Natural killer cell (primary cell): ENCODE measurements at regions of chr1 and their contacts with region 1.

Region 1: GRCh38 chr1:8629241-8630091 is 188.0 kb downstream of the RERE start:
- DNase-seq: peak in 1 of 2 donors; percentile 27
- ATAC-seq: peak; percentile 78 to 90 (median 86)
- H3K4me3 ChIP-seq: no peak overlapping the region
- H3K4me3 Mint-ChIP-seq: peak overlapping the region; percentile 69
- H3K27ac ChIP-seq: peak overlapping the region; percentile 32
- H3K27ac Mint-ChIP-seq: peak overlapping the region; percentile 80 to 85
- H3K4me1 ChIP-seq: peaks cover 8% of the 10 kb centered on the region
- H3K4me1 Mint-ChIP-seq: peaks cover 57 to 58% of the 10 kb centered on the region in 2 donors
- H3K27me3 ChIP-seq: no peaks in the 10 kb centered on the region
- H3K27me3 Mint-ChIP-seq: no peaks in the 10 kb centered on the region
- CTCF ChIP-seq: no peak

Region 2: DNA sequence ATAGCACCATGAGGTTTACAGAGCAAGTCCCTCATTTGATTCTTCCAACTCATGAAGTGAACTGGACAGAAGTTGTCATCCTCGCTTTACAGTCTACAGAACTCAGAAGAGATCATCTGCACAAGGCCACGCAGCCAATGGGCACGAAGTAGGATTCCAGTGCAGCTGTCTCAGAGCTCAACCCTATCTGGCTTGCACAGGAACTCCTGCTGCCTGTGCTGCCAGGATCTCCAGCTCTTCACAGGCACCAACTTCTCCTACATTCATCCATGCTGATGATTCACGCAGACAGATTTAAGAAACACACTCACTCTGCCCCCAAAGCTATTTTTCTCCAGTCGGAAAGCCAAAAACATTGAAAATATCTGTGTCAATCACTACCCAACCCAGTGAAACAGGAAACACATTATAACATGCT is 31.0 kb after region 1 on chr1:
- intact Hi-C with region 1: loop called (anchors 5 kb)
- DNase-seq: no peak
- ATAC-seq: no peak
- H3K4me3 ChIP-seq: no peak overlapping the region
- H3K4me3 Mint-ChIP-seq: no peak overlapping the region
- H3K27ac ChIP-seq: no peak overlapping the region
- H3K27ac Mint-ChIP-seq: no peak overlapping the region
- H3K4me1 ChIP-seq: peaks cover 25% of the 10 kb centered on the region
- H3K4me1 Mint-ChIP-seq: peaks cover 6 to 13% of the 10 kb centered on the region in 2 donors
- H3K27me3 ChIP-seq: no peaks in the 10 kb centered on the region
- H3K27me3 Mint-ChIP-seq: no peaks in the 10 kb centered on the region
- CTCF ChIP-seq: no peak